ENCODE measurements at regions of chr18 and their contacts with region 1.

Region 1: DNA sequence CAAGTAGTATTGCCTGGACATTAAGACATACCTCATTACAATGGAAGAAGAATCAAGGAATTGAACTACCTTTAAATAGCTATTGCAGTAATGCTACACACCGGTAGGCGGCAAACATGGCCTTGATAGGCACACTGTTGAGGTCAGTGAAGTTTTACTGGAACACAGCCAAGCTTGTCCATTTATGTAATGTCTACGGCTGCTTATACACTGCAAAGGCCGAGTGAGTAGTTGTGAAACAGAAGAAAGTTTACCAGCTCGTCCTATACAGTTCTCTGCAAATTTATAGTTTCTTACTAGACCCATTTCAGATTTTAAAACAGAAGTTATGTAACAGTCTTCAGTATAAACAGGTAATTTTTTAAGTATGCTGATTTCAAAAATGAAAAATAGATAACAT is 38.8 kb downstream of the PPP4R1 start:
- DNase-seq: peak; percentile 36
- H3K4me3 ChIP-seq: no peak overlapping the region
- H3K27me3 ChIP-seq: no peaks in the 10 kb centered on the region
- CTCF ChIP-seq: peak; percentile 73

Region 2: GRCh38 chr18:9561759-9562158 is 13.8 kb before region 1 on chr18:
- CTCF ChIA-PET with region 1: interaction called, 46 read pairs
- POLR2A ChIA-PET with region 1: interaction called, 5 read pairs
- DNase-seq: no peak
- H3K4me3 ChIP-seq: no peak overlapping the region
- H3K27me3 ChIP-seq: no peaks in the 10 kb centered on the region
- CTCF ChIP-seq: no peak

Region 3: GRCh38 chr18:9661564-9661963 is 86.0 kb after region 1 on chr18:
- CTCF ChIA-PET with region 1: interaction called, 20 read pairs
- POLR2A ChIA-PET with region 1: no interaction called
- DNase-seq: no peak
- H3K4me3 ChIP-seq: no peak overlapping the region
- H3K27me3 ChIP-seq: no peaks in the 10 kb centered on the region
- CTCF ChIP-seq: peak; percentile 38

Region 4: GRCh38 chr18:9683407-9684396 is 108.1 kb after region 1 on chr18:
- CTCF ChIA-PET with region 1: interaction called, 20 read pairs
- POLR2A ChIA-PET with region 1: no interaction called
- DNase-seq: peak; percentile 27
- H3K4me3 ChIP-seq: no peak overlapping the region
- H3K27me3 ChIP-seq: no peaks in the 10 kb centered on the region
- CTCF ChIP-seq: peak; percentile 68